AG04449 (cell line): ENCODE measurements at regions of chr1 and their contacts with region 1.

Region 1: DNA sequence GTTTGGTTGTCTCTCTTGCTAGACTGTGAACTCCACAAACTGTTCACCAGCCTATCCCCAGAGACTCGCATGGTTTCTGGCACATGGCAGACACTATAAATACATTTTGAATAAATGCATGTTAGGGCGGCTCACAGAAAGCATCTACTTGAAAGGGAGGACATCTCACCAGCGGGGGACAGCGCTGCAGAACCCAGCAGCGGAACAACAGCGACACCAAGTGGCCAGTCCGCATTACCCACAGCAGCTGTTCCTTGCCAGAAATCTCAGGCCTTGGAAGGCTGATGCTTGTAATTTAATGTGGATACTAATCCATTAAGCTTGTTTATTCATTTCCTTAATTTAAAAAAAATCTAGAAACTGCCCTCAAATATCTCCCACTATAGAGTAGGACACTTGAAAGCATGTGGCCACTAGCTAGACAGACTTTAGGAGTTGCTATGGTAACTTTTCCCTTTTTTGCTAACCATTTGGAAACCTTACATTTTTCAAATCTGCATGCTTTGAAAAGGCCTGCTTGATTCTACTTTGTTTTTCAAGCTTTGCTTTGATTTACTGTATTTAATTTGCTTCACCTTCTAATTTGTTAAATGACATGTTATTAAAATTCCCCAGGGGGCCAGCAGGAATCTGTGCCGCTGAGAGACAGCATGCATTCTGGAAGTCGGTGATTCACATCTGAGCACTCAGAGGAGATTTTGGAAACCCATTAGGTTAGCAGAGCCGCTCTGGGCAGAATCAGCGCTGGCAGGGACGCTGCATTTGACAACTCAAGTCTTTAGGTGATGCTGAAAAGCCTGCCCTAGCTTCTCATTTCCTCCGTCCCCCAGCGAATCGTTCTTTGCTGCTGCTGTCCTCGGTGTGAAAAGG is 63.5 kb upstream of the SSX2IP start:
- DNase-seq: peak; percentile 51
- H3K4me3 ChIP-seq: no peak overlapping the region
- CTCF ChIP-seq: peak; percentile 91

Region 2: GRCh38 chr1:84143796-84144565 is 609.8 kb before region 1 on chr1 and contains the start of gene PRKACB:
- CTCF ChIA-PET with region 1: interaction called, 19 read pairs
- POLR2A ChIA-PET with region 1: no interaction called
- DNase-seq: no peak
- H3K4me3 ChIP-seq: no peak within 1 kb of the TSS
- CTCF ChIP-seq: no peak

Region 3: GRCh38 chr1:84442256-84442655 is 311.5 kb before region 1 on chr1:
- CTCF ChIA-PET with region 1: interaction called, 109 read pairs
- POLR2A ChIA-PET with region 1: no interaction called
- DNase-seq: peak; percentile 82
- H3K4me3 ChIP-seq: no peak overlapping the region
- CTCF ChIP-seq: peak; percentile 54

Region 4: DNA sequence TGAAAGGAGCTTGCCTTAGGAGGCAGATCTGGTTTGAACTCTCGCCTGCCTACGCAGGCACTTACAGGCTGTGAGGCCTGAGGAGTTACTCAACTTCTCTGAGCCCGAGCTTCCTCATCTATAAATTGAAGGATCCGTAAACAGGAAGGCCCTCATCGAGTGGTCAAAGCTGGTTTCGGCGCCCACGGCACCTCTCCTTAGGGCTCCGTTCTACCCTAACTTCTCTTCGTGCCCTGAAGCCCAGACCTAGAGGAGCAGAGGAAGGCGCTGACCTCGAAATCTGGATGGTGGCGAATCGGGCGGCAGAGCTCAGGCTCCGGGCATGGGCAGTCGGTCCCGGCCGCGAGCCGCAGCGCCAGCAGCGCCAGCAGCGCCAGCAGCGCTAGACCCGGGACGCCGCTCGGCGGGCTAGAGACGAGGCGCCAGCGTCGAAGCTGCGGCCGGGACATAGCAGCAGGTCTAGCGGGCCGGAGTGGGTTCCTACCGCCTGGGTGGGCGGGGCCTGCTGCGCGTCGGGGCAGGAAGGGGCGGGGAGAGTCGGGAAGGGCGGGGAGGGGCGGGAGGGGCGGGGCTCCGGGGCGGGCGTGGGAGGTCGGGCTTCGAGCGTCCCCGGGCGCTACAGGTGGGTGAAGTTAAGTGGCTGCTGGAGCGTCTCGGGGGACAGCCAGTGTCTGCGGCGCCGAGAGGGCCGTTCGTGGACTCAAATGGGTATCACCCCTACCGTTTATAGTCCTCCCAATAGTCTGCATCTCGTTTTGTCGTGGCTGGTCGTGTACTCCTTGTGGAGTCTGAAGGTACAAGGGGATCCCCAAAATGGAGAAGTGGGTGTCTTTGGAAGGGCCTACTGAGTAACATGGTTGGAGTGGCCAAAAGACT is 179.5 kb before region 1 on chr1 and contains the start of gene CTBS:
- CTCF ChIA-PET with region 1: interaction called, 10 read pairs
- POLR2A ChIA-PET with region 1: no interaction called
- DNase-seq: no peak
- H3K4me3 ChIP-seq: peak within 1 kb of the TSS; percentile 73
- CTCF ChIP-seq: no peak

Region 5: GRCh38 chr1:84603941-84604830 is 149.6 kb before region 1 on chr1:
- CTCF ChIA-PET with region 1: interaction called, 27 read pairs
- POLR2A ChIA-PET with region 1: no interaction called
- DNase-seq: peak; percentile 63
- H3K4me3 ChIP-seq: peak overlapping the region; percentile 43
- CTCF ChIP-seq: peak; percentile 58

Region 6: GRCh38 chr1:84668185-84668584 is 85.6 kb before region 1 on chr1:
- CTCF ChIA-PET with region 1: interaction called, 22 read pairs
- POLR2A ChIA-PET with region 1: no interaction called
- DNase-seq: no peak
- H3K4me3 ChIP-seq: no peak overlapping the region
- CTCF ChIP-seq: no peak

Region 7: GRCh38 chr1:84772428-84772943 is 18.7 kb after region 1 on chr1:
- CTCF ChIA-PET with region 1: interaction called, 123 read pairs
- POLR2A ChIA-PET with region 1: no interaction called
- DNase-seq: no peak
- H3K4me3 ChIP-seq: no peak overlapping the region
- CTCF ChIP-seq: peak; percentile 79